ENCODE measurements at regions of chr11 and their contacts with region 1.

Region 1: DNA sequence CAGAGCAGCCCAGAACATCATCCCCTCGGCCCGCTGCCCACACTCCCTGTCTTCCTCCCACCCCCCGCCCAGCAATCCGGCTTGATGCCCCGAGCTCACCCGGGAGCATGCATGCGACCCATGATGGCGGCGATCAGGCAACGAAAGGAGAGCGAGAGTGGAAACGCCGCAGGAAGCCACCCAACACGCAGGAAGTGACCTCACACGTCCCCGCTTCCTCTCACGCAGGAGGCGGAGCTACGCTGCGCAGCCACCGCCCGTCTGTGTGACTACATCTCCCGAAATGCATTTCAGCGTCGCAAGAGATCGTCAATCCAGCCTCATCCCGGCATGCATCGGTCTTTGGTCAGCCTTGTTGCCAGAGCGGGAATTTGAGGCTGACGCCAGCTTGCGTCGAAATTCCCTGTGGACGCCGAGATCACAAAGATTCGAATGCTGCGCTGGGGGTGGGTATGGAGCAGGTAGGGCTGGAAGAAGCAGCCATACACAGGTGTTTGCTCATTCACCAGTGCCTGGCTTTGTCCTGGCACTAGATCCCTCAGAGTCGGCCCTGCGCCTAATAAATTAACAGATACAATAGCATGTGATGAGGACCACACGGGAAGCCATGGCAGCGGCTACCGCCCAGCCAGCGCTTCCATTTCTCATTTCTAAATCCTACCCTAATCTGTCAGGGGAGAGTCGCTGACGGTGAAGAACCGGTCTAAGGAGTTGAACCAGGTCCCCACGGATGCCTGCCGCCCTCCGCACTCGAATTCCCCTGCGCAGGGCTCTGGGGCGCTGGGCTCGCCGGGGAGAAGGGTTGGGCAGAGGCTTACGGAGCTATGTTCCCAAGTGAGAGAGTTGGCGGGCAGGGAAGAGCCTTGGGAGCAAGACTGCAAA is at the start of gene RPS13:
- DNase-seq: peak; percentile 86
- ATAC-seq: peak; percentile 94
- H3K4me3 Mint-ChIP-seq: peak within 1 kb of the TSS; percentile 99
- H3K27ac Mint-ChIP-seq: peak within 1 kb of the TSS; percentile 96
- H3K4me1 Mint-ChIP-seq: peaks cover 38% of the 10 kb centered on the region
- H3K27me3 Mint-ChIP-seq: no peaks in the 10 kb centered on the region
- CTCF ChIP-seq: no peak
- total RNA-seq, gene RPS13: 1,617 and 1,778 TPM in 2 replicates

Region 2: GRCh38 chr11:16738193-16738946 is 339.4 kb before region 1 on chr11 and contains the start of gene C11orf58:
- CTCF ChIA-PET with region 1: no interaction called
- POLR2A ChIA-PET with region 1: interaction called, 29 read pairs
- intact Hi-C with region 1: loop called (anchors 1 kb)
- DNase-seq: peak; percentile 86
- ATAC-seq: peak; percentile 97
- H3K4me3 Mint-ChIP-seq: peak within 1 kb of the TSS; percentile 74
- H3K27ac Mint-ChIP-seq: no peak within 1 kb of the TSS
- H3K4me1 Mint-ChIP-seq: peaks cover 21% of the 10 kb centered on the region
- H3K27me3 Mint-ChIP-seq: no peaks in the 10 kb centered on the region
- CTCF ChIP-seq: no peak
- total RNA-seq, gene C11orf58: 112 and 130 TPM in 2 replicates

Region 3: DNA sequence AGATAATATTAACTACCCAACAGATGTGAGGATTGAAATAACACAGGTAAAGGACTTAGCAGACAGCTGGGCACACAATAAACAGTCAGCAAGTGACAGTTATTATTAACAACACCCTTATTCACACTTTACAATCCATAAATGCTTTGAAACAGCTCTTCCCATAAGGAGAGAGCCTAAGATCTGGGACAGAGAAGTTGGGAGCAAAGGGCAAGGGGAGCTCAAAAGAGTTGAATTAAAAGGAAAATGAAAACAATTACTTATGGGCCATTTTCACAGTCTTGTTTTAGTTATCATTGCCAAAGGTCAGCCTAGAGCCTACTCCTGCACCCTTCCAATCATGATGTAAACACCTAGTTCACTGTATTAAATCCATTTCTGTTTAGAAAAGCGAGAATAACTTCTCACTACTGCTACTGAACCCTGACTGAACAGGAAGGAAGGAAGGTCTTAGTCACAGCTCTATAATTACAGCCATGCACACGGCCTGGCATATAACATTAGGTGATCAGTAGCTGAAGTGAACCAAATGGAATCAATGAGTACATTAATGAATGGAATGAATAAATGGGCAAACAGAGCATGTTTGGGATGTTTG is 174.9 kb before region 1 on chr11:
- CTCF ChIA-PET with region 1: no interaction called
- POLR2A ChIA-PET with region 1: interaction called, 8 read pairs
- intact Hi-C with region 1: loop called (anchors 1 kb)
- DNase-seq: no peak
- ATAC-seq: peak; percentile 64
- H3K4me3 Mint-ChIP-seq: peak overlapping the region; percentile 74
- H3K27ac Mint-ChIP-seq: peak overlapping the region; percentile 92
- H3K4me1 Mint-ChIP-seq: peaks cover 33% of the 10 kb centered on the region
- H3K27me3 Mint-ChIP-seq: no peaks in the 10 kb centered on the region
- CTCF ChIP-seq: no peak

Region 4: GRCh38 chr11:17063171-17064002 is 14.4 kb before region 1 on chr11:
- CTCF ChIA-PET with region 1: no interaction called
- POLR2A ChIA-PET with region 1: interaction called, 10 read pairs
- intact Hi-C with region 1: no loop called
- DNase-seq: peak; percentile 39
- ATAC-seq: peak; percentile 71
- H3K4me3 Mint-ChIP-seq: no peak overlapping the region
- H3K27ac Mint-ChIP-seq: no peak overlapping the region
- H3K4me1 Mint-ChIP-seq: peaks cover 3% of the 10 kb centered on the region
- H3K27me3 Mint-ChIP-seq: no peaks in the 10 kb centered on the region
- CTCF ChIP-seq: no peak

Region 5: DNA sequence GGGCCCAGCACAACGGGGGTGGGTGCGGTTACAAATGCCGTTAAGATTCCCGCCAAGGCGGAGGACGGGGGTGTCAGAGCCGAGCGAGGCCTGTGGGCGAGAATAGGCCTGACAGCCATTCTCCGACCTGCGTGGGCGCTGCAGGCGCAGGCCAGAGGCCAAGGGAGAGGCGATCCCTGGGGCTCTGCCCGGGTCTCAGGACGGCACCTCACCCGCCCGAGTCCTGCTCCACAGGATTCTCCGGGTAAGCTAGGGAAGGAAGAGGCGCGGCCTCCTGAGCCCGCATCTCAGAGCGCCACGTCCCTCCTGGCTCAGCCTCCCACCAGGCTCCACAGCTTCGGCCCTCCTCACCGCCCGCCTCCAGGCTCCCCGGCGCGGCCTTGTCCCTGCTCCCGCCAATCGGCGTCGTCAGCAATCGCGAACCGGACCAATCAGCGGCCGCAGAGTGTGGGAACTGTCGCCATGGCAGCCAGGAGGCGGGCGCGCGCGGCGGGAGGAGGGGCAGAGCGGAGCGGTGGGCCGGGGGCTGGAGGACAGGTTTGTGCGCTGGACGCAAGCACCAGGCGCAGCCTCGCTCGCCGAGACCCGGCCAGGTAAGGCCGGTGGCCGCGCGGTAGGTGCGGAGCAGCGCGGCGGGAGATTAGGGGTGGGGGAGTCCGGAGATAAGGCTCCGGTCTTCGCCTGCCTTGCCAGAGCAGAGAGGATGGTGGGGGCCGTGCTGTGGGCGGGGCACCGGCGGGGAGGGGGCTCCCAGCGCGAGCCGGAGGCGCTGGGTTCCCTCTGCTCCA is 198.7 kb after region 1 on chr11 and contains the start of gene NUCB2:
- CTCF ChIA-PET with region 1: interaction called, 3 read pairs
- POLR2A ChIA-PET with region 1: interaction called, 15 read pairs
- intact Hi-C with region 1: loop called (anchors 1 kb)
- DNase-seq: peak; percentile 95
- ATAC-seq: peak; percentile 97
- H3K4me3 Mint-ChIP-seq: peak within 1 kb of the TSS; percentile 96
- H3K27ac Mint-ChIP-seq: peak within 1 kb of the TSS; percentile 85
- H3K4me1 Mint-ChIP-seq: peaks cover 20% of the 10 kb centered on the region
- H3K27me3 Mint-ChIP-seq: peaks cover 2% of the 10 kb centered on the region
- CTCF ChIP-seq: no peak
- total RNA-seq, gene NUCB2: 6.2 and 6.8 TPM in 2 replicates

Region 6: GRCh38 chr11:17384002-17384511 is 306.3 kb after region 1 on chr11:
- CTCF ChIA-PET with region 1: no interaction called
- POLR2A ChIA-PET with region 1: no interaction called
- intact Hi-C with region 1: loop called (anchors 10 kb)
- DNase-seq: peak; percentile 65
- ATAC-seq: peak; percentile 66
- H3K4me3 Mint-ChIP-seq: no peak overlapping the region
- H3K27ac Mint-ChIP-seq: no peak overlapping the region
- H3K4me1 Mint-ChIP-seq: peaks cover 3% of the 10 kb centered on the region
- H3K27me3 Mint-ChIP-seq: no peaks in the 10 kb centered on the region
- CTCF ChIP-seq: peak; percentile 69

Region 7: GRCh38 chr11:18105802-18106574 is 1028.2 kb after region 1 on chr11 and contains the start of gene SAAL1:
- CTCF ChIA-PET with region 1: no interaction called
- POLR2A ChIA-PET with region 1: no interaction called
- intact Hi-C with region 1: loop called (anchors 10 kb)
- DNase-seq: peak; percentile 91
- ATAC-seq: peak; percentile 97
- H3K4me3 Mint-ChIP-seq: peak within 1 kb of the TSS; percentile 91
- H3K27ac Mint-ChIP-seq: peak within 1 kb of the TSS; percentile 76
- H3K4me1 Mint-ChIP-seq: peaks cover 28% of the 10 kb centered on the region
- H3K27me3 Mint-ChIP-seq: peaks cover 14% of the 10 kb centered on the region
- CTCF ChIP-seq: no peak
- total RNA-seq, gene SAAL1: 34.4 and 39.7 TPM in 2 replicates